Activated B cell treated with CpG ODN at 0.5 μM for 24 hours (primary cell): ENCODE measurements at regions of chr5 and their contacts with region 1.

Region 1: GRCh38 chr5:127492854-127493738 is 24.3 kb upstream of the PRRC1 start:
- DNase-seq: no peak
- ATAC-seq: peak; percentile 54
- H3K4me3 Mint-ChIP-seq: no peak overlapping the region
- H3K27ac Mint-ChIP-seq: no peak overlapping the region
- H3K4me1 Mint-ChIP-seq: peaks cover 3% of the 10 kb centered on the region
- H3K27me3 Mint-ChIP-seq: peaks cover 8% of the 10 kb centered on the region
- CTCF ChIP-seq: peak; percentile 99

Region 2: GRCh38 chr5:126339215-126339805 is 1153.8 kb before region 1 on chr5:
- CTCF ChIA-PET with region 1: interaction called, 3 read pairs
- POLR2A ChIA-PET with region 1: no interaction called
- intact Hi-C with region 1: loop called (anchors 2 kb)
- DNase-seq: no peak
- ATAC-seq: no peak
- H3K4me3 Mint-ChIP-seq: no peak overlapping the region
- H3K27ac Mint-ChIP-seq: no peak overlapping the region
- H3K4me1 Mint-ChIP-seq: no peaks in the 10 kb centered on the region
- H3K27me3 Mint-ChIP-seq: peaks cover 21% of the 10 kb centered on the region
- CTCF ChIP-seq: peak; percentile 40

Region 3: DNA sequence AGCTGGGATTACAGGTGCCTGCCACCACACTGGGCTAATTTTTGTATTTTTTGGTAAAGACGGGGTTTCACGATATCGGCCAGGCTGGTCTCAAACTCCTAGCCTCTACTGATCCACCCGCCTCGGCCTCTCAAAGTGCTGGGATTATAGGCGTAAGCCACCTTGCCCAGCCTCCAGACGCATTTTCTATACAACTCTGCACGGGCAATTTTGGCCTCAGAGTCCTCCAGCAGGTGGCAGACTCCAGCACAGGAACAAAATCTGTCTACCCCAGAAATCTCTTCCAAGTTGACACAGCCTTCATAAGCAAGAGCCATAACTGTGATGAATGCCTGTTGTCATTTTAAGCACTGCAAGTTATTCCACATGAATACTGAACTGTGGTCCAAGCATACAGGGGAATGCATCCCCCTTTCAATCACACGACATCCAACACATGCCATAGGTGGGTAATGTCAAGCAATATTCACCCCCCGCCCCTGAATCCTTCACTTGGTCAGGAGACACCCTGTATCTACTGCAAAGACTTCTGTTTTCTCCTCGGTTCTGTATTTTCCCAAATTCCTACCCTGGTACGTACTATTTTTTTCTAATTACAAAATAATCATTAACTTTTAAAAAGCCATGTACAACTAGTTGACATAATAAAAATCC is 948.9 kb before region 1 on chr5:
- CTCF ChIA-PET with region 1: no interaction called
- POLR2A ChIA-PET with region 1: no interaction called
- intact Hi-C with region 1: loop called (anchors 2 kb)
- DNase-seq: no peak
- ATAC-seq: no peak
- H3K4me3 Mint-ChIP-seq: no peak overlapping the region
- H3K27ac Mint-ChIP-seq: no peak overlapping the region
- H3K4me1 Mint-ChIP-seq: no peaks in the 10 kb centered on the region
- H3K27me3 Mint-ChIP-seq: no peaks in the 10 kb centered on the region
- CTCF ChIP-seq: peak; percentile 45

Region 4: DNA sequence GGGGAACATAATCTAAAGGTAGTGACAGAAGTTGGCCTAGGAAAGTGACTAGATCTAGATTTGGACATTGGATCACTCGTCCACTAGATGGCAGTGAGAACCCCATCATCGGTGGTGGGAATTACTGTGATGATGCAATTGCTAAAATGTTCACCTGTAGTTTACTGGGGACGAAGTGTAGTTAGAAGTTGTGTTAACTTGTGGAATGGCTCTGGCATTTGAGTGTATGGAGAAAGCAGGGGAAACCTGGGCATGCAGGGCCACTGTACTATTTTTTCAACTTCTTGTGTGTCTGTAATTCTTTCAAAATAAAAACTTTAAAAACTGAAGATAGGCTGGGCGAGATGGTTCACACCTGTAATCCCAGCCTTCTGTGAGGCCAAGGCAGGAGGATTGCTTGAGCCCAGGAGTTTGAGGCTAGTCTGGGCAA is 816.9 kb before region 1 on chr5:
- CTCF ChIA-PET with region 1: no interaction called
- POLR2A ChIA-PET with region 1: no interaction called
- intact Hi-C with region 1: loop called (anchors 1 kb)
- DNase-seq: peak; percentile 19
- ATAC-seq: peak; percentile 82
- H3K4me3 Mint-ChIP-seq: no peak overlapping the region
- H3K27ac Mint-ChIP-seq: peak overlapping the region; percentile 4
- H3K4me1 Mint-ChIP-seq: peaks cover 3% of the 10 kb centered on the region
- H3K27me3 Mint-ChIP-seq: no peaks in the 10 kb centered on the region
- CTCF ChIP-seq: peak; percentile 67

Region 5: GRCh38 chr5:126837906-126838539 is 655.1 kb before region 1 on chr5:
- CTCF ChIA-PET with region 1: interaction called, 9 read pairs
- POLR2A ChIA-PET with region 1: no interaction called
- intact Hi-C with region 1: loop called (anchors 2 kb)
- DNase-seq: no peak
- ATAC-seq: peak; percentile 28
- H3K4me3 Mint-ChIP-seq: no peak overlapping the region
- H3K27ac Mint-ChIP-seq: no peak overlapping the region
- H3K4me1 Mint-ChIP-seq: no peaks in the 10 kb centered on the region
- H3K27me3 Mint-ChIP-seq: no peaks in the 10 kb centered on the region
- CTCF ChIP-seq: no peak

Region 6: GRCh38 chr5:127313847-127314473 is 179.1 kb before region 1 on chr5:
- CTCF ChIA-PET with region 1: interaction called, 3 read pairs
- POLR2A ChIA-PET with region 1: no interaction called
- intact Hi-C with region 1: loop called (anchors 10 kb)
- DNase-seq: peak; percentile 50
- ATAC-seq: peak; percentile 75
- H3K4me3 Mint-ChIP-seq: no peak overlapping the region
- H3K27ac Mint-ChIP-seq: no peak overlapping the region
- H3K4me1 Mint-ChIP-seq: peaks cover 2% of the 10 kb centered on the region
- H3K27me3 Mint-ChIP-seq: peaks cover 8% of the 10 kb centered on the region
- CTCF ChIP-seq: no peak

Region 7: DNA sequence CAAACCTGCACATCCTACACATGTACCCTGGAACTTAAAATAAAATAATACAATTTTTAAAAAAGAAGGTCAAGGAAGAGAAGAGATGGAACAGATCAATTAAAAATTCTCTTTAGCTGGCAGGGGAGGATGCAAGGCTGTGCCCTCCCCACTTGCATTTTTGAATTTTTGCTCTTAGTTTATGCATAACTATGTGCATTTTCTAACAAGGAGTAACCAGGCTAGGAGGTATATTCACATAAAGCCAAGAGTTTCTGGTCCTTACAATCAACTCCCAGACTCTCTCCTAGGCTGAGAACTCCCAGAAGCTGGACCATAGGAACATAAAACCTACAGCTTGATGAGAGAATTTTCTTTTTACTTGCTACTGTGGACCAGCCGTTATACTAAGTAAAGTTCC is 239.9 kb after region 1 on chr5:
- CTCF ChIA-PET with region 1: no interaction called
- POLR2A ChIA-PET with region 1: no interaction called
- intact Hi-C with region 1: no loop called
- DNase-seq: no peak
- ATAC-seq: no peak
- H3K4me3 Mint-ChIP-seq: no peak overlapping the region
- H3K27ac Mint-ChIP-seq: no peak overlapping the region
- H3K4me1 Mint-ChIP-seq: no peaks in the 10 kb centered on the region
- H3K27me3 Mint-ChIP-seq: peaks cover under 1% of the 10 kb centered on the region
- CTCF ChIP-seq: no peak